ENCODE measurements at regions of chr10 and their contacts with region 1.

Region 1: GRCh38 chr10:14536241-14537213 is 205.8 kb upstream of the FRMD4A start:
- DNase-seq: no peak
- ATAC-seq: peak; percentile 88
- H3K4me3 ChIP-seq: no peak overlapping the region
- H3K27ac ChIP-seq: no peak overlapping the region
- H3K4me1 ChIP-seq: peaks cover 3% of the 10 kb centered on the region; the same call in 1 of the 2 replicates
- H3K27me3 ChIP-seq: no peaks in the 10 kb centered on the region
- CTCF ChIP-seq: peak; percentile 65 to 69 (median 66); a peak in 5 of 6 replicates
- EP300 ChIP-seq: no peak
- POLR2A ChIP-seq: no peak
- RAD21 ChIP-seq: peak; percentile 71

Region 2: DNA sequence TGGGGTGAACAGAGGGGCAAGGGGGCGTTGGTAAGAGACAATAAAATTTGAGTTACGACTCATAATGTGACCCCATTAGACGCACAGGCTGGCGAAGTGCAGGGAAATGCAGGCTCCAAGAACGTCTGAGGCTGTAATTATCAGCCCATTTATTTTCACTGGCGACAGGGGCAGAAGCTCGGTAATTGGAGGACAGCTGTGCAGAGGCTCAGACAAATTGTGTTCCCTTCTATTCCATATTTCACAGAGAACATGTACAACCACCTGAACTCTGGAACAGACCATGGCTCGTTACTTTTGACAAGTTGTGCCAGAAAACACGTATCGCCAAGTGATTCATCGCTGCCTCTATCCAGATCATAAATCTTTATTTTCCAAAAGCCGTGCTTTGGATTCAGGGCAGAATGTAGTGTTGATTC is 68.5 kb before region 1 on chr10:
- CTCF ChIA-PET with region 1: no interaction called
- POLR2A ChIA-PET with region 1: no interaction called
- RAD21 ChIA-PET with region 1: no interaction called
- SMC1A ChIA-PET with region 1: no interaction called
- in situ Hi-C with region 1: no loop called
- intact Hi-C with region 1: no loop called
- DNase-seq: no peak
- ATAC-seq: no peak
- H3K4me3 ChIP-seq: no peak overlapping the region
- H3K27ac ChIP-seq: no peak overlapping the region
- H3K4me1 ChIP-seq: no peaks in the 10 kb centered on the region
- H3K27me3 ChIP-seq: no peaks in the 10 kb centered on the region; a peak in 1 of 4 replicates
- CTCF ChIP-seq: no peak
- EP300 ChIP-seq: no peak
- POLR2A ChIP-seq: no peak
- RAD21 ChIP-seq: no peak

Region 3: DNA sequence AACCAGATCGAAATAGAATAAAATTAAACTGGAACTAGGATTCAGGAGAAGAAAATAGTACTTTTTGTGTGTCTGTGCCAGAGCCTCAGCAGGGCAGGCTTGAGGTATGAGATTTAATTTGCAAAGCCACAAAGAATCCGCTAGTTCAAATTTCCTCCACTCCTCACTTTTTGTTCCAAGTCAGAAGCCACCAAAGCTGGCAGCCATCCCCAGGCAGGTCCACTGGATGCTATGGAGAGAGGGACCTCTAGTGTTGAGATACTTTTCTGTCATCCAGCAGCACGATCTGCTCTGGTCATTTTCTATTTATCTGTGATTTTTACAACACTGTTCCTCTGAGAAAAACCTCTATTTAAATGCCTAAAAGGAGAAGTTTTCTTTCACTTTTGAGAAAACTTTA is 57.9 kb before region 1 on chr10:
- CTCF ChIA-PET with region 1: no interaction called
- POLR2A ChIA-PET with region 1: no interaction called
- RAD21 ChIA-PET with region 1: no interaction called
- SMC1A ChIA-PET with region 1: no interaction called
- in situ Hi-C with region 1: no loop called
- intact Hi-C with region 1: no loop called
- DNase-seq: no peak
- ATAC-seq: peak; percentile 69
- H3K4me3 ChIP-seq: no peak overlapping the region
- H3K27ac ChIP-seq: no peak overlapping the region
- H3K4me1 ChIP-seq: no peaks in the 10 kb centered on the region
- H3K27me3 ChIP-seq: peaks cover 0 to 2% of the 10 kb centered on the region in 2 experiments; a peak in 1 of 4 replicates
- CTCF ChIP-seq: peak; percentile 45 to 64 (median 56); a peak in 5 of 6 replicates
- EP300 ChIP-seq: no peak
- POLR2A ChIP-seq: no peak
- RAD21 ChIP-seq: peak; percentile 63

Region 4: DNA sequence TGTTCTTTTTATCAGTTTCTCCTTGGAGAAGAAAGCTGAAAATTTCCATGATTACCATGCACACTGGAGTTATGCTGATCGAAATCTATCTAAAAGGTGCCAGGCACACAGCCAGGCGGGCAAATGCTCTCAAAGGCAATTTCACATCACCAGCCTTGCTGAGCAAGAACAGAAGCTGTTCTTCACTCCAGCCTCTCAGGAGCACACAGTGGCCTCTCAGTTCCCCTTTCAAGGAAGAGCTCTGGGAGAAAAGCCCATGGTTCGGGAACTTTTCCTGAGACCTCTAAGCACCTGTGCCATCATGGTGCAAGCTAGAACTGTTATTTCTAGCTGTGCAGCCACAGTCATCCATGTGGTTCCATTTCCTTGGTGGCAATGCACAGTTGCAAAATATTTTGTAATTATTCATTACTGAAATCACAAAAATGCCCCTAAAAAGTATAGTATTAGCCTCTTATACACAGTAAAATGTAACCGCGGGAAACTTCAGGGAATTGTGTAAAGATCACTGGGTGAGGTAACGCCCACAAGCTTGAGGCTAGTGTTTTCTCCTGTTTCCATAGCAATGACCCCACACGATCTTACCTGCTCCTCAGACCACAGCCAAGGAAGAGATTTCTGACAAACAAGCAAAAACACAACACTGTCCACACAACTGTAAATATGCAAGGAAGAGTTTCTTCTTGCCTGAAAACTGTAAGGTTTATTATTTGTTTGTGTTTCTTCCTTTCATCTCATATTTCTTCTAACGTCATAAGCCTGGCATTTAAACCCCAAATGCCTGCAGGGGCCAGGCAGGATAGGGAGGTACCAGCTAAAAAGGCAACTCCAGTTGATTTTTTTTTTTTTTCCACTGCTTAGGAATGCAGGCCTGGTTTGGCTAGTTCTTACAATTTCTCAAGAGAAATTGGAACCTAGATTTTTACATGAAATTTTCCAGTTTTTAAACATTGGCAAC is 117.0 kb after region 1 on chr10:
- CTCF ChIA-PET with region 1: interaction called, 10 read pairs
- POLR2A ChIA-PET with region 1: no interaction called
- RAD21 ChIA-PET with region 1: no interaction called
- SMC1A ChIA-PET with region 1: no interaction called
- in situ Hi-C with region 1: no loop called
- intact Hi-C with region 1: no loop called
- DNase-seq: no peak
- ATAC-seq: peak; percentile 52
- H3K4me3 ChIP-seq: no peak overlapping the region
- H3K27ac ChIP-seq: no peak overlapping the region
- H3K4me1 ChIP-seq: peaks cover 40% of the 10 kb centered on the region
- H3K27me3 ChIP-seq: no peaks in the 10 kb centered on the region; a peak in 1 of 4 replicates
- CTCF ChIP-seq: no peak
- EP300 ChIP-seq: peak in 1 of 2 experiments; percentile 51; a peak in 2 of 4 replicates
- POLR2A ChIP-seq: no peak
- RAD21 ChIP-seq: no peak